Heart left ventricle (tissue), 16 donors: ENCODE measurements at regions of chr3 and their contacts with region 1.

Region 1: GRCh38 chr3:160038862-160039562 is 50.4 kb downstream of the IL12A start:
- DNase-seq: peak in 3 of 5 donors; percentile 13 to 70 (median 42)
- ATAC-seq: peak in 3 of 4 donors; percentile 33 to 56 (median 52)
- H3K4me3 ChIP-seq: peak overlapping the region in 11 of 12 donors; percentile 4 to 49 (median 35)
- H3K27ac ChIP-seq: no peak overlapping the region
- H3K4me1 ChIP-seq: peaks cover 0 to 8% (median 1%) of the 10 kb centered on the region in 12 donors
- H3K27me3 ChIP-seq: peaks cover 2 to 43% (median 15%) of the 10 kb centered on the region in 9 donors
- CTCF ChIP-seq: no peak
- POLR2A ChIP-seq: no peak

Region 2: DNA sequence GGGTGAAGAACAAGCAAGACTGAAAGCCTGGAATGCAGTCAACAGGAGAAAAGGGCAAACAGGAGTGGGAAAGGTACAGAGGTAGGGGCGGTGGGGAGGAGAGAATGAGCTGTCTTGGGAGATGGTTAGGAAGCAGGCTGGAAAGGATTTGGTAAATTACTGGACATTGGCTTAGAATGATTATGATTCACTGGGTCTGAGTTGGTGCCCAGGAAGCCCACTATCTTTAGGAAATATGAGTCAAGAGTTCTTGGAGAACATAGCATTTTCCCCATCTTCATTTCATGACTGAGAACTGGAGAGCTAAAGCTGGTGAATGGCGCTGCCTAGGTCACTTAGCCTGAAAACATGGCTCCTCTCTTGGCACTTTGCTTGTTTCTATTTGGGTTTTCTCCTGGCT is 111.5 kb after region 1 on chr3:
- intact Hi-C with region 1: loop called in 1 of 10 experiments (anchors 10 kb)
- DNase-seq: no peak
- ATAC-seq: peak in 3 of 4 donors; percentile 39 to 89 (median 73)
- H3K4me3 ChIP-seq: no peak overlapping the region
- H3K27ac ChIP-seq: peak overlapping the region in 1 of 12 donors; percentile 43
- H3K4me1 ChIP-seq: peaks cover 0 to 6% (median 0%) of the 10 kb centered on the region in 12 donors
- H3K27me3 ChIP-seq: no peaks in the 10 kb centered on the region
- CTCF ChIP-seq: no peak
- POLR2A ChIP-seq: no peak

Region 3: DNA sequence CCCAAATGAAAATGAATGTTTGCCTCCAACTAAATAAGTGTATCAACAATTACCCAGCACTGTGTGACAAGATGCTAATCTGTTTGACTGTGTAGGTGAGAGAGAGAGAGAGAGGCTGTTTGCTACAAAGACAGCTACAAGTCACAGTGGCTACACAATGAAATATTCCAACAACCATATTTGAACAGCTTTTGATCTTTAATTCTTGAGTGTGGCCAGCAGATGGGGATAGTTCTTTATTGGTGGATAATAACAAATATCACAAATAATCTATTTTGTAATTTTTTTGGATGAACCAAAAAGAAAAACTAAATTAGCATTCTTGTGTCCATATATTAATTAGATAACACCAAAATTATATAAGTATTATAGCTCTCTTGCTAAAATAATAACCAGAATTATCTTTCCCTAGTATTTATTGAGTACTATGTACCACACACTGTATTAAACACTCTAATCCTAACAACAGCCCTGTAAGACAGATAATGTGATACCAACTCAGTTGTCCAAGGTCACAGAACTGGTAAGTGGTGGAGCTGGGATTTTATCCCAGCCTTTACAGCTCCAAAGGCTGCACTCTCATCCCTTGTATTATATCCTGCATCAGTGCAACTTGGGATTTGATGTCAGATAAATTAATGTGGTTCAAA is 124.3 kb after region 1 on chr3:
- intact Hi-C with region 1: loop called in 2 of 10 experiments (anchors 10 kb)
- DNase-seq: no peak
- ATAC-seq: no peak
- H3K4me3 ChIP-seq: no peak overlapping the region
- H3K27ac ChIP-seq: no peak overlapping the region
- H3K4me1 ChIP-seq: no peaks in the 10 kb centered on the region
- H3K27me3 ChIP-seq: peaks cover 0 to 4% (median 0%) of the 10 kb centered on the region in 9 donors
- CTCF ChIP-seq: peak in 11 of 12 donors; percentile 20 to 63 (median 49)
- POLR2A ChIP-seq: no peak

Region 4: GRCh38 chr3:160225176-160226025 is 186.4 kb after region 1 on chr3 and contains the start of gene C3orf80:
- intact Hi-C with region 1: loop called in 1 of 10 experiments (anchors 10 kb)
- DNase-seq: peak; percentile 25 to 74 (median 39)
- ATAC-seq: peak in 3 of 4 donors; percentile 61 to 87 (median 85)
- H3K4me3 ChIP-seq: peak within 1 kb of the TSS; percentile 37 to 77 (median 56)
- H3K27ac ChIP-seq: peak within 1 kb of the TSS in 3 of 12 donors; percentile 19 to 83 (median 43)
- H3K4me1 ChIP-seq: peaks cover 4 to 27% (median 11%) of the 10 kb centered on the region in 12 donors
- H3K27me3 ChIP-seq: peaks cover 0 to 55% (median 26%) of the 10 kb centered on the region in 9 donors
- CTCF ChIP-seq: peak in 2 of 12 donors; percentile 44 to 45
- POLR2A ChIP-seq: no peak
- total RNA-seq, gene C3orf80: 0.09 to 0.35 (median 0.14) TPM in 7 of 9 donors, not detected in the others

Region 5: DNA sequence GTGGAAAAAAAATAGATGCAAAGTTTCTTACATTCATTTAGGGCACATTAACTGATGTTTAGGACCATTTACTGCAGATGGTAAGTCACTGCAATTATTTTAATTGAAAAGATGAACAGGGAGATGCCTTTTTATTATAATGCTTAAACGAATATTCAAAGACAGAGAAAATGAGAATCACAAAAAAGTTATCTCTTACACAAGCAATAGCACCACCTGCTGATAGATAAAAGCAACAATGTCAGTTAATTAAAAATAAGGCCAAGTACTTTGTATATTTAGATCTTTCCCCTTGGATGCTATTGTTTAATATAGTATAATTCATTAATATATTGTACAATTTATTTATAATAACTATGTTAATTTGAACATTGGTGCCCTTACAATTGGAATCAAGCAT is 304.1 kb after region 1 on chr3:
- intact Hi-C with region 1: loop called in 8 of 10 experiments (anchors 5 to 10 kb)
- DNase-seq: no peak
- ATAC-seq: no peak
- H3K4me3 ChIP-seq: no peak overlapping the region
- H3K27ac ChIP-seq: no peak overlapping the region
- H3K4me1 ChIP-seq: peaks cover 0 to 4% (median 0%) of the 10 kb centered on the region in 12 donors
- H3K27me3 ChIP-seq: no peaks in the 10 kb centered on the region
- CTCF ChIP-seq: peak; percentile 19 to 58 (median 42)
- POLR2A ChIP-seq: no peak

Region 6: DNA sequence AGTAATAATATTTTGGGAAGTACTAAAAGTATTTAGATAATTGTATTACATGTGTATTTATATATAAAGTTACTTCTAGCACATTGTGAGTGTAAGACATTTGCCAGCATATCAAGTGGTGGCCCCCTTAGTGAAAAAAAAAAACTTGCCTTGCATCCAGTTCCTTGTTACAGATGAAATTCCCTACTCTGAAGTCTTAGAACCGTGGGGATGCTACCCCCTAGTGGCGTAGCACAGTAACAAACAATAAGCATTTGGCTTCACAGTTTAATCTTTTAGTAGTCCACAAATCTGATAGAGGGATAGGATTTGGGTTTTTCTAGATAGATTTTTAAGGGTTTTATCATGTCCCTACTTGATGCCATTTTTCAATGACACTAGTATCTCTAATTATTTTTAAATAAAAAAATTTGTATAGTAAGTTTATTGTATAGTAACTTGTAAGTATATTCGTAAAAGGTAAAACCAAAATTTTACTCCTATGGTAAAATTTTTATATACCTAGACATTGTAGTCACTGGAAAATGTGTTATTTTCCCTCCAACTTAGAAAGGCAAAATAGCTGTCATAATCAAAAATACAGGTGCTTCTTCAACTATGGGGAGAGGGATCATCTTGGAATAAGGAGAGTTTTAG is 374.7 kb after region 1 on chr3:
- intact Hi-C with region 1: loop called in 9 of 10 experiments (anchors 5 kb)
- DNase-seq: peak in 4 of 5 donors; percentile 41 to 61 (median 47)
- ATAC-seq: peak in 3 of 4 donors; percentile 62 to 65 (median 62)
- H3K4me3 ChIP-seq: no peak overlapping the region
- H3K27ac ChIP-seq: no peak overlapping the region
- H3K4me1 ChIP-seq: peaks cover 0 to 12% (median 0%) of the 10 kb centered on the region in 12 donors
- H3K27me3 ChIP-seq: no peaks in the 10 kb centered on the region
- CTCF ChIP-seq: peak; percentile 79 to 95 (median 90)
- POLR2A ChIP-seq: no peak